Heart left ventricle (tissue), 16 donors: ENCODE measurements at regions of chr9 and their contacts with region 1.

Region 1: GRCh38 chr9:11758016-11758415 is 935.2 kb upstream of the TYRP1 start:
- DNase-seq: no peak
- ATAC-seq: no peak
- H3K4me3 ChIP-seq: no peak overlapping the region
- H3K27ac ChIP-seq: no peak overlapping the region
- H3K4me1 ChIP-seq: no peaks in the 10 kb centered on the region
- H3K27me3 ChIP-seq: no peaks in the 10 kb centered on the region
- CTCF ChIP-seq: no peak
- POLR2A ChIP-seq: no peak

Region 2: GRCh38 chr9:10387282-10387681 is 1370.7 kb before region 1 on chr9:
- intact Hi-C with region 1: loop called in 1 of 10 experiments (anchors 10 kb)
- DNase-seq: no peak
- ATAC-seq: no peak
- H3K4me3 ChIP-seq: no peak overlapping the region
- H3K27ac ChIP-seq: no peak overlapping the region
- H3K4me1 ChIP-seq: no peaks in the 10 kb centered on the region
- H3K27me3 ChIP-seq: no peaks in the 10 kb centered on the region
- CTCF ChIP-seq: no peak
- POLR2A ChIP-seq: no peak

Region 3: DNA sequence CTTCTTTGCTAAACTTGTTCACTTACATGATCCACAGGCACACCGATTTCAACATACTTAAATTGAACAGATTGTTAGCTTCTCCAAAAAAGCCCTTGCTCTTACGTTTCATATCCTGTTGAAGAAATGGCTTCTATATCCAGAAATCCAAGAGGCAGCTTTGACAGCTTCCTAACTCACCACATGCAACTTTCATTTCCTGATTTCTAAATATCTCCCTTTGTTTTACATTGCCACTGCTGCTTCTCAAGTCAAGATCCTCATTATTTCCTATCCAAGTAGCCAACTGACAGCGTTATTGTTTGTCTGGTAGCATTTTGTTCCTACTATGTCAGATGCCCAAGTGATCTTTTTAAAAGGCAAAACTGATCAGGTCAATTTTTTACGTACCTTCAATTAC is 22.0 kb after region 1 on chr9:
- intact Hi-C with region 1: no loop called
- DNase-seq: no peak
- ATAC-seq: no peak
- H3K4me3 ChIP-seq: no peak overlapping the region
- H3K27ac ChIP-seq: no peak overlapping the region
- H3K4me1 ChIP-seq: no peaks in the 10 kb centered on the region
- H3K27me3 ChIP-seq: no peaks in the 10 kb centered on the region
- CTCF ChIP-seq: no peak
- POLR2A ChIP-seq: no peak